Heart left ventricle (tissue), 16 donors: ENCODE measurements at regions of chr16 and their contacts with region 1.

Region 1: DNA sequence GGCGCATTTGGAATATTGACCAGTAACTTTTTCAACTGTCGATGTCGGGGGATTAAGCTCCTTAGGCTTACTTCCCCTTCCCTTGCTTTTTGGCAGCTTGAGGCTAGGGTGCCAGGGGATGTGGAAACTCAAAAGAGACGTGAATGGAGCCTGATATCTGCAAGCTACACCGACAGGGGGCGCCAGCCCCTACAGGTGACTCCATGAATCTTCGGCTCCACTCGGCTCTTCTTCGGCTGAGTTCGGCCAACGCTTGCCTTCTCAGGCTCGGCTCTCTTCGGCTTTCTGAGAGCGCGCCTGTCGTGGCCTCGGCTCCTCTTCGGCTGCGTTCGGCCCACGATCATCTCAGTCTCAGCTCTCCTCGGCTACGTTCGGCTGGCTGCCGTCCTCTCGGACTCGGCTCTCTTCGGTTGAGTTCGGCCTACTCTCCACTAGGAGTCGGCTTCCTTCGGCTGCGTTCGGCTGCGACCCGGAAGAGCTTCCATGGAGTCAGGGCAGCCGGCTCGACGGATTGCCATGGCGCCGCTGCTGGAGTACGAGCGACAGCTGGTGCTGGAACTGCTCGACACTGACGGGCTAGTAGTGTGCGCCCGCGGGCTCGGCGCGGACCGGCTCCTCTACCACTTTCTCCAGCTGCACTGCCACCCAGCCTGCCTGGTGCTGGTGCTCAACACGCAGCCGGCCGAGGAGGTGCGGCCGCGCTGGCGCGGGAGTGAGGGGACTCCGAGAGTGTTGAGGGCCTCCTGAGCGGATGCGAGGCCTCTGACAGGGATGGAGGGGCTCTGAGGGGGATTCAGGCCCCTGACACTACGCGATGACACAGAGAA is at the start of gene ERCC4:
- DNase-seq: peak; percentile 99 to 100 (median 100)
- ATAC-seq: peak; percentile 96 to 98 (median 98)
- H3K4me3 ChIP-seq: peak within 1 kb of the TSS; percentile 51 to 96 (median 87)
- H3K27ac ChIP-seq: peak within 1 kb of the TSS; percentile 54 to 90 (median 82)
- H3K4me1 ChIP-seq: peaks cover 3 to 34% (median 19%) of the 10 kb centered on the region in 12 donors
- H3K27me3 ChIP-seq: no peaks in the 10 kb centered on the region
- CTCF ChIP-seq: peak; percentile 84 to 96 (median 92)
- POLR2A ChIP-seq: peak in 1 of 2 donors; percentile 64
- total RNA-seq, gene ERCC4: 6.3 to 15.2 (median 8.3) TPM

Region 2: GRCh38 chr16:14003074-14003570 is 83.2 kb after region 1 on chr16:
- intact Hi-C with region 1: loop called in 2 of 10 experiments (anchors 5 to 10 kb)
- DNase-seq: peak; percentile 74 to 83 (median 78)
- ATAC-seq: peak; percentile 41 to 75 (median 74)
- H3K4me3 ChIP-seq: peak overlapping the region in 11 of 12 donors; percentile 6 to 51 (median 37)
- H3K27ac ChIP-seq: peak overlapping the region in 11 of 12 donors; percentile 27 to 85 (median 74)
- H3K4me1 ChIP-seq: peaks cover 0 to 70% (median 47%) of the 10 kb centered on the region in 12 donors
- H3K27me3 ChIP-seq: no peaks in the 10 kb centered on the region
- CTCF ChIP-seq: peak in 6 of 12 donors; percentile 6 to 37 (median 24)
- POLR2A ChIP-seq: no peak

Region 3: GRCh38 chr16:14070877-14071575 is 151.1 kb after region 1 on chr16 and contains the start of gene MRTFB:
- intact Hi-C with region 1: loop called in 6 of 10 experiments (anchors 5 to 10 kb)
- DNase-seq: peak; percentile 78 to 90 (median 83)
- ATAC-seq: peak; percentile 48 to 96 (median 84)
- H3K4me3 ChIP-seq: peak within 1 kb of the TSS; percentile 76 to 99 (median 89)
- H3K27ac ChIP-seq: peak within 1 kb of the TSS; percentile 58 to 90 (median 81)
- H3K4me1 ChIP-seq: peaks cover 0 to 23% (median 11%) of the 10 kb centered on the region in 12 donors
- H3K27me3 ChIP-seq: no peaks in the 10 kb centered on the region
- CTCF ChIP-seq: no peak
- POLR2A ChIP-seq: peak in 1 of 2 donors; percentile 72
- total RNA-seq, gene MRTFB: 16.3 to 38.3 (median 32.4) TPM

Region 4: DNA sequence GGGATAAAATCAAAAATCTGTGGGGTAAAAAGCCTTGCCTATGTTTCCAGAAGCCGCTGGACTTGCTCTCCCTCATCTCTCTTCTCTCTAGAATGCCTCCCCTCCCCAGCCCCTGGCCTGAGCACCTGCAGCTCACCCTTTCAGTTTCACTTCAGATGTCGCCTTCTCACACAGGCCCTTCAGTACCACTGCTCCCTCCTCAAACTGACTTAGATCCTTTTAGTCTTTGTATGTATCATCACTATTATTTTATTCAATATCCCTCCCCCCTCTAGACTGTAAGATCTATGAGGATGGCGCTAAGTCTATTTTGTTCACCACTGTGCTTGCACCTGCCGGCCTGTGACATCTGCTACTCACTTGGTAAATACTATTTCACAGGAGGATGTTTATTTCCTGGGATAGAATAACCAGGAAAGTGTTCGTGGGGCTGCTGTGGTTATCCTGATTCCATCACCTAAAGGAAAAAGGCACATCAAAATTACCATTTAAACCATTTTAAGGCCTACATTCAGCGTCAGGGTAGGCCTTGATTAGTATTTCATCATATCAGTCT is 273.5 kb after region 1 on chr16:
- intact Hi-C with region 1: loop called in 9 of 10 experiments (anchors 5 to 10 kb)
- DNase-seq: no peak
- ATAC-seq: no peak
- H3K4me3 ChIP-seq: peak overlapping the region in 2 of 12 donors; percentile 2 to 6
- H3K27ac ChIP-seq: peak overlapping the region in 3 of 12 donors; percentile 12 to 18 (median 15)
- H3K4me1 ChIP-seq: peaks cover 0 to 43% (median 16%) of the 10 kb centered on the region in 12 donors
- H3K27me3 ChIP-seq: no peaks in the 10 kb centered on the region
- CTCF ChIP-seq: no peak
- POLR2A ChIP-seq: no peak

Region 5: DNA sequence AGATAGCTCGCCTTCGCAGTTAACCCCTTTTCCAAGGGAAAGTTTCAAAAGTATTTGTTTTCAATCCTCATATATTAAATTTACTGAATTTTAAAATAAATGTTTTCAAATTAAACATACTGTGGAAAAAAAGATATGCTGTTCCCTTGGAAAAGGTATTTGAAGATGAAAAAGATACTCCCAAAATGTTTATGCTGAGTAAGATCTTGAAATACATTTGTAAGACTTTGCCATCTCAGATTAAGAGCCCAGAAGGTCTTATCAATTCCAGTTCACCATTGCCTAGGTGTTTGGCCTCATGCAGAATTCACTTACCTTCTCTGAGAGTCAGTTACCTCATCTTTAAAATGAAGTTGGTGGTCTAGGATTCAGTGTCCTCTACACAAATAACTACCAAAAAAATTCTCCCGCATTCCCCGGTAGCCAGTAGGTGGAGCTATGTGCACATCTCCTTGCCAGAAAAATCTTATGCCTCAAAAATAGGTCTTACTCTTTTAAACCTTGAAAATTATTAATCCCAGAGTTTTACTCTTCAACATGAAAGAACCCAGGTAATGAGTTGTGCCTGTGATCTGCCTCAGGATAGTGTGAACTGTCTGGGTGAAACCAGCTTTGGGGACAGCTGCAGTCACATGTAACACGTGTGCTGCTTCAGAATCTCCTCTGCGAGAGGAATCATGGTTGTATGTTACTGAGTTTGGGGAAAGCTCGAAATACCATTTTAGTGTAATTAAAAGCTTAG is 329.6 kb after region 1 on chr16:
- intact Hi-C with region 1: loop called in 9 of 10 experiments (anchors 5 to 10 kb)
- DNase-seq: peak in 1 of 5 donors; percentile 23
- ATAC-seq: peak in 1 of 4 donors; percentile 12
- H3K4me3 ChIP-seq: no peak overlapping the region
- H3K27ac ChIP-seq: no peak overlapping the region
- H3K4me1 ChIP-seq: peaks cover 0 to 3% (median 0%) of the 10 kb centered on the region in 12 donors
- H3K27me3 ChIP-seq: no peaks in the 10 kb centered on the region
- CTCF ChIP-seq: peak; percentile 66 to 90 (median 78)
- POLR2A ChIP-seq: no peak

Region 6: GRCh38 chr16:14529010-14529669 is 609.2 kb after region 1 on chr16:
- intact Hi-C with region 1: loop called in 9 of 10 experiments (anchors 5 to 10 kb)
- DNase-seq: peak in 4 of 5 donors; percentile 64 to 77 (median 76)
- ATAC-seq: peak; percentile 72 to 91 (median 88)
- H3K4me3 ChIP-seq: peak overlapping the region in 6 of 12 donors; percentile 2 to 42 (median 34)
- H3K27ac ChIP-seq: peak overlapping the region in 6 of 12 donors; percentile 2 to 54 (median 40)
- H3K4me1 ChIP-seq: peaks cover 0 to 26% (median 7%) of the 10 kb centered on the region in 12 donors
- H3K27me3 ChIP-seq: no peaks in the 10 kb centered on the region
- CTCF ChIP-seq: peak; percentile 51 to 80 (median 74)
- POLR2A ChIP-seq: no peak